AG04449 (cell line): ENCODE measurements at regions of chr11 and their contacts with region 1.

Region 1: GRCh38 chr11:76524919-76525318 is 80.1 kb downstream of the EMSY start:
- DNase-seq: no peak
- H3K4me3 ChIP-seq: no peak overlapping the region
- CTCF ChIP-seq: no peak

Region 2: DNA sequence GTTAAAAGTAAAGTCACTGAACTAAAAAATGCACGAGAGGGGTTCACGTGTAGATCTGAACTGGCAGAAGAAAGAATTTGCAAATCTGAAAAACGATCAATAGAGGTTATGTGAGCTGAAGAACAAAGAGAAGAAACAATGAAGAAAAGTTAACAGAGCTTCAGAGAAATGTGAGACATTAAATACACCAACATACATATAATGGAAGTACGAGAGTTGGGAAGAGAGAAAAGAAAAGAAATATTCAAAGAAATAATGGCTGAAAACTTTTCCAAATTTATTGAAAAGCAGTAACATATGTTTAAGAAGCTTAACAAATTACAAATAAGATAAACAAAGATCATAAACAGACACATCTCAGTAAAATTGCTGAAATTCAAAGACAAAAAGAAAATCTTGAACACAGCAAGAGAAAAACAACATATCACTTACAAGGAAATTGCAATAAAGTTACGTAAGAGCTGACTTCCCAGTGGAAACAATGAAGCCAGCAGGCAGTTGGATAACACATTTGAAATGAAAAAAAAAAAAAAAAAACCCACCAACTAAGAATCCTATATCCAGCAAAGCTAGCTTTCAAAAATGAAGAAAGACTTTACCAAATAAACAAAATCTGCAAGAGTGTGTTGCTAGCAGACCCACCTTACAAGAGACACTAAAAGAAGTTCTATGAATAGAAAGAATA is 23.3 kb before region 1 on chr11:
- CTCF ChIA-PET with region 1: no interaction called
- POLR2A ChIA-PET with region 1: no interaction called
- DNase-seq: no peak
- H3K4me3 ChIP-seq: no peak overlapping the region
- CTCF ChIP-seq: no peak

Region 3: DNA sequence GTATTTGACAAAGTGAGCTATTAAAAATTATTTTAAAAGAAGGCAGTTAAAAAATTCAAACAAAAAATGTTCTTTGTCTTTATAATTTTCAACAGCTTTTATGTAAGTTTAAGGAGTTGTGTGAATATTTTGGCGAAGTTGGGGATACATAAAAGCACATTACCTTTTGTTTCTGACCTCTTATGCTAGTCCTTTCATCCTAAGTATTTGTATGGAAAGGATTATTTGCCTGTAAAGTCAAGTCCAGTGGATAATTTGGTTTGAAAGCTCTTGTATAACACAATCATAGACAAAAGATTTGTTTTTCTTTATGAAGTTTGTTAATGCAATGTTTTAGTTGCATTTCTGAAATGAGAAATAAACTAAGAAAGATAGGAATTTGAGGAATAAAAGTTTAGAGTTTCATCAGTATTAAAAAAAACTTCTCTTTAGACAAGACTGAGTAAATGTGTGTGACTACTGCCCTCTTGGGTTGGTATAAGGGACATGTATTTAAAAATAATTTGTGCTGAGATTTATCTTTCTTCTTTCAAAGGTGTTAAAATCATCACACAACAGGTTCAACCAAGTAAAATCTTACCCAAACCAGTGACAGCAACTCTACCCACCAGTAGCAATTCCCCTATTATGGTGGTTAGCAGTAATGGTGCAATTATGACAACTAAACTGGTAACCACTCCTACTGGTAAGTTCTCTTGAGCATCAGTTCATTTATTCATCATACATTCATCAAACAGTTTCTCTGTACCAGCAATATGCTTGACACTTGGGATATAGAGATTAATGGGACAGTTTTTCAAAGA is 11.9 kb before region 1 on chr11:
- CTCF ChIA-PET with region 1: interaction called, 25 read pairs
- POLR2A ChIA-PET with region 1: no interaction called
- DNase-seq: no peak
- H3K4me3 ChIP-seq: no peak overlapping the region
- CTCF ChIP-seq: peak; percentile 22

Region 4: DNA sequence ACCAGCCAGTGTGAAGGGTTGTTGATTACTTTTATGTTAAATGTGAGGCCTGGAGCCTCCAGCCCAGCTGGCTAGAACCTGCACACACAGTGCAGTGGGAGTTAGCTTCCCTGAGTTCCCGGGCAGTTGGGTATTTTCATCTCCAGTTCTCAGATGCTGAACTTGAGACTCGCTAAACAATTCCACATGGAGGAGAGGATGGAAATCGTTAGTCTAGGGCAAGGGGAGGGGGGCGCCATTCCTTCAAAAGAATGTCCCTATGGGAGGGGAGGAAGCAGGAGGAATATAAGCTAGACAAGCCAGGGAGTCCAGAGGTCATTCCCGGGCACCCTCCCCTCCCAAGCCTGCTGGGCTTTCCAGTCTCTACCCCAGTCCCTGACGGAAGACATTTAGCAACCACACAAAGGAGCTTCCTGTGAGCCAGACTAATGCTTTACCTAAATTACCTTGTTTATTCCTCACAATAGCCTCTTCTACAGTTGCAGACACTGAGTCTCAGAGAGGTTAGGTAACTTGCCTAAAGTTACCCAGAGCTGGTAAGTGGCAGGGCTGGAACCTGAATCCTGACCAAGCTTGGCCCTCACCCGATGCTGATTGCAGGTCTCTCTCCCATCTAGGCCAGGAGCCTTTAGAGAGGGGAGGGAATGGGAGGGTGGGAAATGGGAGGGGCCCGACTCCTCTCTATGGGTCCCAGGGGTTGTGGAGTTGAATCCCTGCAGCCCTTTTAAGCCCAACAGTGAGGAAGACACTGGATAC is 256.3 kb after region 1 on chr11:
- CTCF ChIA-PET with region 1: no interaction called
- POLR2A ChIA-PET with region 1: no interaction called
- DNase-seq: no peak
- H3K4me3 ChIP-seq: no peak overlapping the region
- CTCF ChIP-seq: no peak